ENCODE measurements at regions of chr16 and their contacts with region 1.

Region 1: DNA sequence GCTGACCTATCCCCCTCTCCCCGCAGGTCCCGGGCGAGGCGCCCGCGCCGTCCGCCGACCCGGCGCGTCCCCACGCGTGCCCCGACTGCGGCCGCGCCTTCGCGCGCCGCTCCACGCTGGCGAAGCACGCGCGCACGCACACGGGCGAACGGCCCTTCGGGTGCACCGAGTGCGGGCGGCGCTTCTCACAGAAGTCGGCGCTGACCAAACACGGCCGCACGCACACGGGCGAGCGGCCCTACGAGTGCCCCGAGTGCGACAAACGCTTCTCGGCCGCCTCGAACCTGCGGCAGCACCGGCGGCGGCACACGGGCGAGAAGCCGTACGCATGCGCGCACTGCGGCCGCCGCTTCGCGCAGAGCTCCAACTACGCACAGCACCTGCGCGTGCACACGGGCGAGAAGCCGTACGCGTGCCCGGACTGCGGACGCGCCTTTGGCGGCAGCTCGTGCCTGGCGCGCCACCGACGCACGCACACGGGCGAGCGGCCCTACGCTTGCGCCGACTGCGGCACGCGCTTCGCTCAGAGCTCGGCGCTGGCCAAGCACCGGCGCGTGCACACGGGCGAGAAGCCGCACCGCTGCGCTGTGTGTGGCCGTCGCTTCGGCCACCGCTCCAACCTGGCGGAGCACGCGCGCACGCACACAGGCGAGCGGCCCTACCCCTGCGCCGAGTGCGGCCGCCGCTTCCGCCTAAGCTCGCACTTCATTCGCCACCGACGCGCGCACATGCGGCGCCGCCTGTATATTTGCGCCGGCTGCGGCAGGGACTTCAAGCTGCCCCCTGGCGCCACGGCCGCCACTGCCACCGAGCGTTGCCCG is 10.3 kb downstream of the ZNF771 start:
- DNase-seq: peak; percentile 84
- ATAC-seq: peak; percentile 86
- H3K4me3 Mint-ChIP-seq: peak overlapping the region; percentile 71
- H3K27ac Mint-ChIP-seq: peak overlapping the region; percentile 69
- H3K4me1 Mint-ChIP-seq: peaks cover 12% of the 10 kb centered on the region
- H3K27me3 Mint-ChIP-seq: no peaks in the 10 kb centered on the region
- CTCF ChIP-seq: no peak

Region 2: DNA sequence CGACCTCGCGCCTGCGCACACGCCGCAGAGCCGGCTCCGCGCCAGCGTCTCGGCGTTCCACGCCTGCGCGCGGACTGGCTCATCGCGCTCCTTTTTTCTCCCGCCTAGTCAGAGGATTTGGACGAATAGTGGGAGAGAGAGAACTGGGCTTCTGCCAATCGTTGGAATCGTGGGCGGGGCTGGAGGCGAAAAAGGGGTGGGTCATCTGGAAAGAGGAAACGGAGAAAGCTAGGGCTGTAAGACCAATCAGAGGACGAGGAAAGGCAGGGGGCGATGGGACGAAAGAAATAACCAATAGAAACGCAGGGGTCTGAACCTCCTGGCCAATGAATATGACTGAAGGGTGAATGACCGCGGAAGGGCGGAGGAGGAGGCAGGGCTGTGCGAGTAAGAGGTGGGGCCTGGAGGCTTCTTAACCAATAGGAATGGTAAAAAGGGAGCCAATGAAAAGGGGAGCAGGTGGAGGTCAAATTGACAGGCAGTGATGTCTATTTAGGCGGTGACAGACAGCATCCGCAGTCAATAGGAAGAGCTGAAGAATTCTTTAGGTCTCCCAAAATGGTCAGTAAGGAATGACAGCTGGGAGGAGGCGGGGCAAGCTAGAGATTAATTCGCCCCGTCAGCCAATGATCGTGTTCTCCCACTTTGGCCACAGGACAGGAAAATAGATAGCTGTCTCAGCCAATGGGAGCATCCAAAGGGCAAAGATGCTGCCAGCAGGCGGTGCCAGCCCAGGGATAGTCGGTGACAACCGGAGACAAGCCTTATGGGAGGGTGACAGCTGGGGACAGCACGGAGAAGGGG is 47.1 kb before region 1 on chr16 and contains the start of gene TBC1D10B:
- CTCF ChIA-PET with region 1: interaction called, 4 read pairs
- POLR2A ChIA-PET with region 1: interaction called, 19 read pairs
- intact Hi-C with region 1: no loop called
- DNase-seq: peak; percentile 92
- ATAC-seq: peak; percentile 83
- H3K4me3 Mint-ChIP-seq: peak within 1 kb of the TSS; percentile 87
- H3K27ac Mint-ChIP-seq: peak within 1 kb of the TSS; percentile 86
- H3K4me1 Mint-ChIP-seq: peaks cover 52% of the 10 kb centered on the region
- H3K27me3 Mint-ChIP-seq: no peaks in the 10 kb centered on the region
- CTCF ChIP-seq: no peak
- total RNA-seq, gene TBC1D10B: 46.3 and 50.2 TPM in 2 replicates

Region 3: DNA sequence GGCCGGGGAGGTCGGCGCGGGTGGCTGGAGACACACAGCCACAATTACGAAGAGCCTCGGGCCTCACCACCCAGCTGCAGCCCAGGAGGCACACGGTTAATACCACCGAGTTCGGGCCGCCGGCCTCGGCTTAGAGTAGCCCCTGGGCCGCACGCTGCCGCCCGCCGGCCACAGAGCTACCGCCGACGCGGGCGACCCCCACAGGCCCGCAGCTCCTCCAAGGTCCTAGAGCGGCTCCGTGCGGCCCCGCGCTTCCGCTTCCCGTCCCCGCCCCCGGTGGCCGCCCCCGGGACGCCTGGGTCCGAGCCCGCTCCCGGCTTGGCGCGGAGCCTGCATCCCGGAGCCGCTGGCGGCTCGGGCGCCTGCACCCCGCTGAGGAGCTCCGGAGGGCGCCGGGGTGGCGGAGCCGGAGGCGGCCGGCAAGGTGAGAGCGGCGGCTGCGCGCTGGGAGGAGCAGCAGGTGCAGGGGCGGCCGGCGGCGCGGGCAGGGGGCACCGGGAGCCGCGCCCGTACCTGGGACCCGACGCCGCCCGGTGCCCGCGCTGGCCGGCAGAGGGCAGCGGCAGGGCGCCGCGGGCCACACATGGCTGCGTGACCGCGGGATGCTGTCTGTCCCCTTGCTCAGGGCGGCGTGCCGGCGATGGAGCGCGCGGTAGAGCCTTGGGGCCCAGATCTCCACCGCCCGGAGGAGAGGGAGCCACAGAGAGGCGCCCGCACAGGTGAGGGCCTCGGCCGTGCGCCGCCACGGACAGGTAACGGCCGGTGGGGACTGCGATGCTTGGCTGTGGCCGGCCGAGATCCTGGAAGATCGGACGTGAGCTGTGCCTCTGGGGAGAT is 22.4 kb before region 1 on chr16 and contains the start of gene ZNF48:
- CTCF ChIA-PET with region 1: interaction called, 5 read pairs
- POLR2A ChIA-PET with region 1: interaction called, 7 read pairs
- intact Hi-C with region 1: loop called (anchors 2 kb)
- DNase-seq: peak; percentile 77
- ATAC-seq: peak; percentile 96
- H3K4me3 Mint-ChIP-seq: peak within 1 kb of the TSS; percentile 91
- H3K27ac Mint-ChIP-seq: peak within 1 kb of the TSS; percentile 78
- H3K4me1 Mint-ChIP-seq: peaks cover 31% of the 10 kb centered on the region
- H3K27me3 Mint-ChIP-seq: no peaks in the 10 kb centered on the region
- CTCF ChIP-seq: no peak
- total RNA-seq, gene ZNF48: 11.7 and 13.0 TPM in 2 replicates

Region 4: GRCh38 chr16:30445408-30446202 is 27.9 kb after region 1 on chr16 and contains the start of gene SEPHS2:
- CTCF ChIA-PET with region 1: no interaction called
- POLR2A ChIA-PET with region 1: interaction called, 14 read pairs
- intact Hi-C with region 1: no loop called
- DNase-seq: peak; percentile 87
- ATAC-seq: peak; percentile 96
- H3K4me3 Mint-ChIP-seq: peak within 1 kb of the TSS; percentile 95
- H3K27ac Mint-ChIP-seq: peak within 1 kb of the TSS; percentile 96
- H3K4me1 Mint-ChIP-seq: peaks cover 45% of the 10 kb centered on the region
- H3K27me3 Mint-ChIP-seq: no peaks in the 10 kb centered on the region
- CTCF ChIP-seq: no peak
- total RNA-seq, gene SEPHS2: 79.1 and 80.0 TPM in 2 replicates

Region 5: GRCh38 chr16:30534368-30535105 is 116.8 kb after region 1 on chr16 and contains the start of gene ZNF747:
- CTCF ChIA-PET with region 1: interaction called, 3 read pairs
- POLR2A ChIA-PET with region 1: interaction called, 30 read pairs
- intact Hi-C with region 1: no loop called
- DNase-seq: peak; percentile 85
- ATAC-seq: peak; percentile 83
- H3K4me3 Mint-ChIP-seq: peak within 1 kb of the TSS; percentile 96
- H3K27ac Mint-ChIP-seq: peak within 1 kb of the TSS; percentile 97
- H3K4me1 Mint-ChIP-seq: peaks cover 23% of the 10 kb centered on the region
- H3K27me3 Mint-ChIP-seq: no peaks in the 10 kb centered on the region
- CTCF ChIP-seq: no peak
- total RNA-seq, gene ZNF747: 16.3 and 21.6 TPM in 2 replicates

Measured in activated B cell treated with CpG ODN at 0.5 μM for 24 hours (primary cell).